ENCODE measurements at regions of chr18 and their contacts with region 1.

Region 1: GRCh38 chr18:23619388-23619881 is 33.1 kb upstream of the NPC1 start:
- DNase-seq: peak; percentile 5 to 29 (median 18)
- ATAC-seq: peak; percentile 59
- H3K4me3 ChIP-seq: peak overlapping the region in 1 of 2 donors; percentile 17
- H3K27ac ChIP-seq: no peak overlapping the region
- H3K4me1 ChIP-seq: peaks cover 15% of the 10 kb centered on the region
- H3K27me3 ChIP-seq: no peaks in the 10 kb centered on the region
- CTCF ChIP-seq: no peak
- POLR2A ChIP-seq: no peak

Region 2: GRCh38 chr18:23784832-23785245 is 165.4 kb after region 1 on chr18:
- intact Hi-C with region 1: no loop called
- DNase-seq: no peak
- ATAC-seq: no peak
- H3K4me3 ChIP-seq: no peak overlapping the region
- H3K27ac ChIP-seq: no peak overlapping the region
- H3K4me1 ChIP-seq: no peaks in the 10 kb centered on the region
- H3K27me3 ChIP-seq: no peaks in the 10 kb centered on the region
- CTCF ChIP-seq: no peak
- POLR2A ChIP-seq: no peak

Region 3: GRCh38 chr18:24126155-24126961 is 506.9 kb after region 1 on chr18:
- intact Hi-C with region 1: loop called (anchors 10 kb)
- DNase-seq: no peak
- ATAC-seq: no peak
- H3K4me3 ChIP-seq: no peak overlapping the region
- H3K27ac ChIP-seq: no peak overlapping the region
- H3K4me1 ChIP-seq: no peaks in the 10 kb centered on the region
- H3K27me3 ChIP-seq: no peaks in the 10 kb centered on the region
- CTCF ChIP-seq: no peak
- POLR2A ChIP-seq: no peak